Calu3 (cell line): ENCODE measurements at regions of chr14 and their contacts with region 1.

Region 1: DNA sequence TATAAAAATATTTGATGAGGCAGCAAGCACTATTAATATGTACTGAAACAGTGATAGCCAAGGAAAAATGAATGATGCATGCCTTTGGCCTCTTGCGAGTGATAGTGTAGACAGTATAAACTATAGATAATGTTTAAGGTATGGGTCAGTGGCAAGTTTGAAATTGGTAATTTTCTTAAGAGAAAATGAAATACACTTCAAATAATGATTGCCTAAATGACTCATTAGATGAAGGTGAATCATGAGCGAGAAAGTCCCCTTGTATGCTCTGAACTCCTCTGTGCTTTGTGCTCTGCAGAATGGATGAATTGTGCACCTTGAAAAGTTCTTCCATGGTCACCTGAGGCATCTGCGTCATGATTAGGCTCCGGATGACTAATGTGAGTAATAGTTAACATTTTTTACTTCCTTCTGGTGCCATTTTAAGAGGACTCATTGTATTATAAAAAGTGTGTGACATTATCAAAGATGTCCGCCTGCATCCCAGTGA is 84.9 kb upstream of the RTL1 start:
- DNase-seq: peak; percentile 75
- H3K4me3 Mint-ChIP-seq: peak overlapping the region; percentile 30
- H3K27ac Mint-ChIP-seq: peak overlapping the region; percentile 100
- H3K4me1 Mint-ChIP-seq: peaks cover 39% of the 10 kb centered on the region
- H3K27me3 Mint-ChIP-seq: no peaks in the 10 kb centered on the region
- CTCF ChIP-seq: no peak

Region 2: DNA sequence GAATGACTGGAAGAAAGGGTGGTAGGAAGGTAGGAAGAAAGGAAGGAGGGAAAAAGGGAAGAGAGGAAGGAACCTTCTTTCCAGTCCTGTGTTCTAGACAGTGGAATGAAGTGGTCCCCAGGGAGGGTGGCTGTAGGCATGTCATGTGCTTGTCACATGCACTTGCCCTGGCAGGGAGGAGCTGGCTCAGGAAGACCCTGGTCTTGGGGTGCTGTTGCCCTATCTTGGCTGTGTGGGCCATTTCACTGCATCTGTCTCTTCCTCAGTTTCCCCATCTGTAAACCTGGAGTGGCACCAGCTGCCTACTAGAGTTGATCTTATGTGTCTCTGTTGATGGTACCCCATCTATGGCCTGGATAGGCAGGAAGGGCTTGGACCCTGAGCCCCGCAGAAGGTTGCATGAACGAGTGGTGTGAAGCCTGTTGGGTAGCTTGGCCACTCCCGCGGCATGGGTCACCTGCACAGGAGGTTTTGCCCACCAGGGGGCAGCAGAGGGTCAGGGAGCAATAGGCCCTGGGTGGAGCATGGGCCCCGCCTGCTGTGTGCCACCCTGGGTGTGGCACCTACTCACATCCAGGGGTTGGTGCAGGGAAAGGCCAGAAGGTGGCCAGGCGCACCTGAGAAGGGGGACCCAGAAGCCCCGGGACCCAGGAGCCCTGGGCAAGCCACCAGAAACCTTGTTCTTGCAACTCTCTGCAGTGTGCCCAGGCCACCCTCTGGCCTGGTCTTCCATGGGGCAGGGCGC is 137.4 kb before region 1 on chr14:
- CTCF ChIA-PET with region 1: no interaction called
- intact Hi-C with region 1: no loop called
- DNase-seq: peak; percentile 95
- H3K4me3 Mint-ChIP-seq: no peak overlapping the region
- H3K27ac Mint-ChIP-seq: no peak overlapping the region
- H3K4me1 Mint-ChIP-seq: peaks cover 7% of the 10 kb centered on the region
- H3K27me3 Mint-ChIP-seq: no peaks in the 10 kb centered on the region
- CTCF ChIP-seq: peak; percentile 92

Region 3: DNA sequence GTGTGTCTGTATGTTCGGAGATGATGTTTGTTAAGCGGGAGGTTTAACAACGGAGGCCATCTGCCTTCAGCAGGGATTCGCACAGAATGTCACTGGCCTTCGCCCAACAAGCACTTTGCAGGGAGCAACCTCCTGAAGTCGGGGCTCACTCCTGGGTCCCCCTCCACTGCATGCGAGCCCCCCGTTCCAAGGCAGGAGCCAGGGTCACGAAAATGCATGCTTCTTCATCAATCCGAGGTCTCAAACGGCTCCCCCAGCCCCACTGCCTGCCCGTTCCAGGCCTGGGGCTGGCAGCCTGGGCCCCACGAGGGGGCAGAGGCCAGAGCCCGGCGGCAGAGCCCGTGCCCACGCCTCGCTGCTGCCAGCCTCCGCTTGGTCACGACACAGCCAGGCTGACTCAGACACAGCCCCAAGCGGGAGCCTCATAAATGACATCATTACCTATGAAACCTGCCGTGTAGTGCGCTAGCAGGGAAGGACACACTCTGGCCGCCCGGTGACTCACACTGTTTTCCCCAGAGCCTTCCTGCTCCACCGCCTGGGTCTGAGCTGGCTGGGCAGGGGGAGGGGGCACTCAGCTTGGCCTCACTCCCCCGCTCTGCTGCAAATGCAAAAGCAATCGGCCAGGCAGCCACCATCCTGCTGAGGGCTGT is 84.6 kb after region 1 on chr14:
- CTCF ChIA-PET with region 1: interaction called, 3 read pairs
- intact Hi-C with region 1: loop called (anchors 2 kb)
- DNase-seq: peak; percentile 94
- H3K4me3 Mint-ChIP-seq: peak overlapping the region; percentile 34
- H3K27ac Mint-ChIP-seq: peak overlapping the region; percentile 47
- H3K4me1 Mint-ChIP-seq: peaks cover 9% of the 10 kb centered on the region
- H3K27me3 Mint-ChIP-seq: no peaks in the 10 kb centered on the region
- CTCF ChIP-seq: no peak